Activated CD4-positive, alpha-beta memory T cell treated with anti-CD3 and anti-CD28 coated beads for 36 hours (primary cell): ENCODE measurements at regions of chr19 and their contacts with region 1.

Region 1: GRCh38 chr19:16062789-16063188 is 13.5 kb upstream of the TPM4 start:
- DNase-seq: peak; percentile 80
- H3K4me3 Mint-ChIP-seq: no peak overlapping the region
- H3K27ac Mint-ChIP-seq: peak overlapping the region; percentile 38
- H3K4me1 Mint-ChIP-seq: peaks cover 30% of the 10 kb centered on the region
- H3K27me3 Mint-ChIP-seq: peaks cover 2% of the 10 kb centered on the region

Region 2: DNA sequence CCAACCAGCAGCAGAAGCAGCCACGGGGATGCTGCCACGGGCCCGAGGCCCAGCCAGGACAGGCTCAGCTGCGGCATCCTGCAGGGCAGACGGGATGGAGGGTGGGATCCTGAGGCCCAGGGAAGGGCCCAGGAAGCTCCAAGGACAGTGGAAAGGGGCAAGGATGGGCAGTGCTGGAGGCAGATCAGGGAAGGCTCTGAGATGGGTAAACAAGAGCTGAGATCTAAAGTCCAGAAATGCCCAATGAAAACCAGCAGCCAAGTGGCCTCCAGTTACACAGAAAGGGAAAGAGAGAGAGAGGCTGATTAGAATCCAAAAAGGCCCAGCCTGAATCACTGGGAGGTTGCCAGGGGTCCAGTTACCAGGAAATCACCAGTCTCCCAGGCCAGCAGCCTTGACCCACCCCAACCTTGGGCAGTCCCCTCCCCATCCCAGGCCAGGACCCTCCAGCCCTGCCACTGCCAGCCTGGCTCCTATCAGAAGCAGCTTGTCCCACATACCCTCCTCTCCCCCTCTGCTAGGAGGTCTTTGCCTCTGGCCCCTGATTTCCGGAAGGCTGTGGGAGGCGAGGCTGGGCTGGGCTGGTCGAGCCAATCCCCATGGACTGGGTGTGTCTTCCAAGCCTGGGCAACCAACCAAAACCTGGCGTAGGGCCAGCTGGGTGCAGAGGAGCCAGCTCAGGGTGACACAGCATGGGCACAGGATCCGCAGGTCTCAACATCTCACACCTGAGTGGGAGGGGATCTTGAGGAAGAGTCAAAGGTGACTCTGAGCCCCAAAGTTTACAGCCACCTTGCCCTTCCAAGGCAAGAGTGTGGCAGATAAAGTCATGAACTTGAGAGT is 128.2 kb before region 1 on chr19 and contains the start of gene CYP4F11:
- CTCF ChIA-PET with region 1: no interaction called
- POLR2A ChIA-PET with region 1: no interaction called
- intact Hi-C with region 1: no loop called
- DNase-seq: no peak
- H3K4me3 Mint-ChIP-seq: no peak within 1 kb of the TSS
- H3K27ac Mint-ChIP-seq: peak within 1 kb of the TSS; percentile 28
- H3K4me1 Mint-ChIP-seq: no peaks in the 10 kb centered on the region
- H3K27me3 Mint-ChIP-seq: peaks cover 26% of the 10 kb centered on the region
- total RNA-seq, gene CYP4F11: not detected

Region 3: GRCh38 chr19:16025108-16026101 is 37.4 kb before region 1 on chr19:
- CTCF ChIA-PET with region 1: no interaction called
- POLR2A ChIA-PET with region 1: no interaction called
- intact Hi-C with region 1: no loop called
- DNase-seq: no peak
- H3K4me3 Mint-ChIP-seq: no peak overlapping the region
- H3K27ac Mint-ChIP-seq: no peak overlapping the region
- H3K4me1 Mint-ChIP-seq: peaks cover 9% of the 10 kb centered on the region
- H3K27me3 Mint-ChIP-seq: no peaks in the 10 kb centered on the region

Region 4: GRCh38 chr19:16051254-16052025 is 11.3 kb before region 1 on chr19:
- CTCF ChIA-PET with region 1: interaction called, 27 read pairs
- POLR2A ChIA-PET with region 1: no interaction called
- intact Hi-C with region 1: no loop called
- DNase-seq: peak; percentile 62
- H3K4me3 Mint-ChIP-seq: no peak overlapping the region
- H3K27ac Mint-ChIP-seq: no peak overlapping the region
- H3K4me1 Mint-ChIP-seq: peaks cover 6% of the 10 kb centered on the region
- H3K27me3 Mint-ChIP-seq: no peaks in the 10 kb centered on the region

Region 5: DNA sequence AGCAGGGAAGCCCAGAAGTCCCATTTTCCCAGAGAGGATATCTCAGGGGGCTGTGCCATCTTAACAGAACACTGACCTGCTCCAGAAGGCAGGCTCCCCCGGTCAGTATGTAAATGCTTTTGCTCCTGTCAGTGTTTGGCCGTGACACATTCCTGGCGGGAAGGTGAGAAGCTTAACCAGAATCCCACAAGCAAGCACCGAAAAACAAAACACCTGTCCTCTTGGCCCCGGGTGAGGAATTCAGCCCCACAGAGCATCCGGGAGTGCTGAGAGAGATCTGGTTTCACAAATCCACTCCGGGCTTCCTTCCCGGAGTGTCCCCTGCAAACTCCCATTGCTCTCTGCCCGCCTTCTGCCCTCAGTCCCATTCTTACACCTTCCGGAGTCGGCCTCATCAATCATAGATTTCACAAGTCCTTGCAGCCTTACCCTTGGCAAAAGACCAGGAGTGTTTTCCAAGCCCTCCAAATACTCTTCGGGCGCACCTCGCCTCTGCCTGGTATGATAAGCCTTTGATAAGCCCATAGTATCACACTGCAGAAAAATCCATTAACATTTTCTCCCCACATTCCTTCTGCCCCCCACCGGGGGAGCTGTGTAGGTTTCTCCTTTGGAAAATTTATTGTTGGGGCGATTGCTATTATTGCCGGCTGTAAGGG is 25.7 kb after region 1 on chr19:
- CTCF ChIA-PET with region 1: interaction called, 41 read pairs
- POLR2A ChIA-PET with region 1: interaction called, 3 read pairs
- intact Hi-C with region 1: no loop called
- DNase-seq: no peak
- H3K4me3 Mint-ChIP-seq: no peak overlapping the region
- H3K27ac Mint-ChIP-seq: peak overlapping the region; percentile 56
- H3K4me1 Mint-ChIP-seq: peaks cover 51% of the 10 kb centered on the region
- H3K27me3 Mint-ChIP-seq: no peaks in the 10 kb centered on the region

Region 6: GRCh38 chr19:16095071-16095571 is 32.3 kb after region 1 on chr19:
- CTCF ChIA-PET with region 1: interaction called, 10 read pairs
- POLR2A ChIA-PET with region 1: no interaction called
- intact Hi-C with region 1: no loop called
- DNase-seq: peak; percentile 44
- H3K4me3 Mint-ChIP-seq: no peak overlapping the region
- H3K27ac Mint-ChIP-seq: peak overlapping the region; percentile 84
- H3K4me1 Mint-ChIP-seq: peaks cover 26% of the 10 kb centered on the region
- H3K27me3 Mint-ChIP-seq: no peaks in the 10 kb centered on the region

Region 7: GRCh38 chr19:16106121-16106520 is 43.3 kb after region 1 on chr19:
- CTCF ChIA-PET with region 1: interaction called, 10 read pairs
- POLR2A ChIA-PET with region 1: no interaction called
- intact Hi-C with region 1: no loop called
- DNase-seq: no peak
- H3K4me3 Mint-ChIP-seq: no peak overlapping the region
- H3K27ac Mint-ChIP-seq: peak overlapping the region; percentile 76
- H3K4me1 Mint-ChIP-seq: peaks cover 5% of the 10 kb centered on the region
- H3K27me3 Mint-ChIP-seq: no peaks in the 10 kb centered on the region